Colonic mucosa (tissue), 4 donors: ENCODE measurements at regions of chr2 and their contacts with region 1.

Region 1: GRCh38 chr2:98568881-98569793 is 39.2 kb downstream of the COA5 start:
- DNase-seq: peak; percentile 70
- H3K4me3 ChIP-seq: no peak overlapping the region
- H3K27ac ChIP-seq: no peak overlapping the region
- H3K4me1 ChIP-seq: no peaks in the 10 kb centered on the region
- H3K27me3 ChIP-seq: no peaks in the 10 kb centered on the region
- CTCF ChIP-seq: peak; percentile 91

Region 2: GRCh38 chr2:98444436-98445176 is 124.5 kb before region 1 on chr2 and contains the start of gene INPP4A:
- intact Hi-C with region 1: loop called (anchors 10 kb)
- DNase-seq: peak; percentile 75
- H3K4me3 ChIP-seq: peak within 1 kb of the TSS; percentile 78
- H3K27ac ChIP-seq: peak within 1 kb of the TSS; percentile 45
- H3K4me1 ChIP-seq: peaks cover 9% of the 10 kb centered on the region
- H3K27me3 ChIP-seq: no peaks in the 10 kb centered on the region
- CTCF ChIP-seq: no peak
- total RNA-seq, gene INPP4A: 11.5 to 17.9 TPM